ENCODE measurements at regions of chr1 and their contacts with region 1.

Region 1: DNA sequence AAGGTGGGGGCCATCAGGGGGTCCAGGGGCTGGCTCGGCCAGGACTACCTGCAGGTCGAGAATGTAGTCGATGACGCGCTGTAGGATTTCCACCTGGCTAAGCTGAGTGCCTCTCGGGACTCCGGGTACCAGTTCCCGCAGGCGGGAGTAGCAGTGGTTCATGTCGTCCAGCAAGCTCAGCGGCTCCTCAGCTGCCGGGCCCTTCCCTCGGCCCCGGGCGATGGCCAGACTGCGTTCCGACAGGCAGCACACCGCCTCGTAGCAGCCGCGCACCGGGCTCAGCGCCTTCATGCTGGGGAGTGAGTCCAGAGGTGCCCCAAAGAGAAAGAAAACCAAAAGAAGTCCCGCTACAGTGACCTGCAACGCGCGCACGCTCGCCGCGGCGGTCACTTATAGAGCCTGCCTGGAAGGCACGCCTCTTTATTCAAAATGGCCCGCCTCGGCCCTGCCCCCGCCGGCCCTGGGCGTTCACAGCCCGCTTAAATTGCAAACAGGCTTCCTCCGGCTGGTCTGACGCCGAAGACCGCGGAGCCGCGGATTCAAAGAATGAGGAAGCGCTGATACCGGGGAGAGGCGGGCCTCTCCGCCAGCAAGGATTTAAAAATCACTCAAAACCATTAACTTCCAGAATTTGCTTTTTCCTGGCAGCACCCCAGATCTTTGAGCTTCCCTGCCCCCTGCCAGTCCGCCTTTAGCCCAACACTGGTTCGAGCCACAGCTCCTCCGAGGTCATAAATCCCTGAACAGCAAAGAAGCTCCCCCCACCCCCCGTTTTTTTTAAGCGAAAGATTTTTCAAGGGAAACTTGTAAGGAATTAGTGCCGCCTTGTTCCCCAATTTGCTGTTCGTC is at the start of gene ID3:
- DNase-seq: peak; percentile 96
- H3K4me3 Mint-ChIP-seq: peak within 1 kb of the TSS; percentile 94
- H3K27ac Mint-ChIP-seq: peak within 1 kb of the TSS; percentile 90
- H3K4me1 Mint-ChIP-seq: peaks cover 49% of the 10 kb centered on the region
- H3K27me3 Mint-ChIP-seq: no peaks in the 10 kb centered on the region
- CTCF ChIP-seq: no peak
- total RNA-seq, gene ID3: 15.7 and 34.8 TPM in 2 replicates

Region 2: DNA sequence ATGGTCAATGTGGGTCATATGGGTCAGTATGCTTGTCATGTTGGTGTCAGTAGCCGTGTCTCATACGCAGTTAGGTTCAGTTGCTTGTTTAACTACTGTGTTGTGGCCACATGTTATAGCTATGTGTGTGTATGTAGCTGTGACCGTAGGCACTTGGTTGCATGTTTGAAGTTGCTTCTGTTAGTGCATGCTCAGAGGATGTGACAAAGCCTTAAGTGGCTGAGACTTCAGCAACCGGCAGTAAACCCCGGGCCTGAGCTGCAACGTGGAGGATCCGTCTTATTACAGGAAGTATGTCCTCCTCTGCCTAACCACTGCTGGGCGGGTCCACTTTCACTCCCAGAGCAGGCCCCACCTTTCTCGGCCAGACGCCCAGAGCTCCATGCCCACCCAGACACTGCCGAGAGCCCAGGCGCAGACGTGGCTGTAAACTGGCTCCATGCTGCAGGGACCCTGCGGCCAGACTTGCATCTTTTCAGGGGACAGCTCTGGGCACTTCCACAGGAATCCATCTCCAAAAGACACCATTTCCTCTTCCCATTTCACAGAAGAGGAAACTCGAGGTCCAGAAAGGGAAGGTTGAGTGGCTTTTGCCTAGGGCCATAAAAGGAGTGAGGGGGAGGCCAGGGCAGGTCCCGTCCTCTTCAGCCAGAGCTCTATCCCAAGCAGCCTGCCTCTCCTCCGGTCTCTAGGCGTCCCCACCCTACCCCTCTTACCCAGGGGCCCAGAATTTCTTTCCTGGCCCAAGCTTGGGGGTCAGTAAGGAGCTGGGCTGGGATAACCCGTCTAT is 136.9 kb before region 1 on chr1:
- CTCF ChIA-PET with region 1: no interaction called
- POLR2A ChIA-PET with region 1: no interaction called
- intact Hi-C with region 1: no loop called
- DNase-seq: no peak
- H3K4me3 Mint-ChIP-seq: no peak overlapping the region
- H3K27ac Mint-ChIP-seq: no peak overlapping the region
- H3K4me1 Mint-ChIP-seq: peaks cover 8% of the 10 kb centered on the region
- H3K27me3 Mint-ChIP-seq: no peaks in the 10 kb centered on the region
- CTCF ChIP-seq: no peak

Region 3: DNA sequence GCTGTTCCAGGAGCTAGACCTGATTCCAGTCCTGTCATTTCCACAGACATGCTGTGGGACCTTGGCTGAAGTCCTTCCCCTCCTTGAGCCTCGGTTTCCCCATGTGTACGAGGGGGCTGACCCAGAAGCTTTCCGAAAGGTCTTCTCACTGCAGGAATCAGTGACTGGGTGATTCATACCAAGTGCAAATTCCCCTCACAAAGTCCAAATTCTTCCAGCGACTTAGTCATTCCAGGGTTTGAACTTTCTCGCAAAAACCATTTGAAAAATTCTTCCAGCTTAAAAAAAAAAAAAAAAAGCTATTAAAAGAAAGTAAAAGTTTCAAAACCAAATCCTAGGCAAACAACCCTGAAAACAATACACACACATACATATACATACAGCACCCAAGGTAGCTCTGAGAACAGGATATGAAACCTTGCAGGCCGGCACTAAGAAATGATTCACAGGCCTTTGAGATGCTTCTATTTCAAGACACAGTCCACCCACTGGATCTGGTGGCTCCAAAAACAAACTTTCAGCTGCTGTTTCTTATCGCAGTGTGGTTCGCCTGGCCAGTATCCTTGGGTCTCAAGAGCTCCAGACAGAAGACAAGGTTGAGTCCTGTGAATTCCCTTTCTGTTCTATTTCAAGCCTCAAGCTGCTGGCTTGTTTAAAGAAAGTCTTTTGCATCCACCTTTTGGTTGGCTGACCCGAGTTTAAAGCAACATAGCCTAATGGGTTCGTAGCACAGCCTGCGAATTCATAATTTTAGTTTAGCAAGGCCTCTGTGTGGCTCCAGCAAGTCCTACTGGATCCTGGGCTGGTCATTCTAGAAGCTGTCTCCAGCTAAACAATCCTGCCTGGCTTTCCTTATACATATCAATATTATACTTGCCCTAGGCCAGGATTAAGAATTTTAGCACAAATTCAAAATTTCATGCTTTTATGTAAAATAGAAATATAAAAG is 18.0 kb after region 1 on chr1:
- CTCF ChIA-PET with region 1: interaction called, 17 read pairs
- POLR2A ChIA-PET with region 1: interaction called, 131 read pairs
- intact Hi-C with region 1: no loop called
- DNase-seq: peak; percentile 60
- H3K4me3 Mint-ChIP-seq: peak overlapping the region; percentile 49
- H3K27ac Mint-ChIP-seq: peak overlapping the region; percentile 92
- H3K4me1 Mint-ChIP-seq: peaks cover 22% of the 10 kb centered on the region
- H3K27me3 Mint-ChIP-seq: no peaks in the 10 kb centered on the region
- CTCF ChIP-seq: no peak

Region 4: GRCh38 chr1:23591460-23592208 is 32.3 kb after region 1 on chr1:
- CTCF ChIA-PET with region 1: interaction called, 9 read pairs
- POLR2A ChIA-PET with region 1: interaction called, 622 read pairs
- intact Hi-C with region 1: loop called (anchors 1 kb)
- DNase-seq: no peak
- H3K4me3 Mint-ChIP-seq: no peak overlapping the region
- H3K27ac Mint-ChIP-seq: peak overlapping the region; percentile 94
- H3K4me1 Mint-ChIP-seq: peaks cover 74% of the 10 kb centered on the region
- H3K27me3 Mint-ChIP-seq: no peaks in the 10 kb centered on the region
- CTCF ChIP-seq: no peak

Region 5: DNA sequence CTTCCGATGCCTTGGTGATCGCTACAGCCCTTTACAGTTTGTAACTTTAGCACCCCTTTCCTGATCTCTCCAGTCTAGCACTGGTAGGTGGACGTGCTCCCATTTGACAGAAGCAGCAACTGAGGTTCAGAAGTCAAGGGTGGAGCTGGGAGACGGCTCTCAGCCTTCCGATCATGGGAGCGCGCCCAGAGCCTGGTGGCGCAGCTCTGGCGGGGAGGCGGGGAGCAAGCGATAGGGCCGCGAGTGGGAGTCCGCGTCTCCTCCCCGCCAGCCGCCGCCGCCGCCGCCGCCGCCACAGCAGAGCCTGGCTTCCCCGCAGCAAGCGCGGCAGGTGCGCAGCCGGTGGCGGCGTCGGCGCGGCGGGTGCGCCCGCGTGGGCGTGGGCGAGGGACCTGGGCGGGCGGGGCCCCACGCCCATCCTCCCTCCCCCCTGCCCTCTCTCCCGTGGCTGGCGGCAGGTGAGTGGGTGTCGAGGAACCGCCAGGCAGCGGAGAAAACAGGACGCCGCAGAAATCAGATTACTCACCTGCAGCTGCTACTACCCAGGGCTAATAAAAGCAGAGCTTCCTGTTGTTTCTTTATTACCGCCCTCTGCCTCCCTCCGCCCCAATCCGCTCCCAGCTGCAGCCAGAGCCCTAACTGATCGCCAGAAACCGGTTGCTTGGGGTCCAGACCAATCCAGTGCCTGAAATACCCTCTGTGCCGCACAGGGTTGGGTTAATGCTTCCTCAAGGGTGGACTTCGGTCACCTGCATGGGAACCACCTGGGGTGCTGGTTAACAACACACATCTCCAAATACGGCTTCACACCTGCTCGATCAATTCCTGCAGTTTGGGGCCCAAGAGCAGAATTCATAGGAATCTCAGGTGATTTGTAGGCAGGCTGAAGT is 60.2 kb after region 1 on chr1:
- CTCF ChIA-PET with region 1: interaction called, 3 read pairs
- POLR2A ChIA-PET with region 1: interaction called, 63 read pairs
- intact Hi-C with region 1: no loop called
- DNase-seq: peak; percentile 42
- H3K4me3 Mint-ChIP-seq: peak overlapping the region; percentile 53
- H3K27ac Mint-ChIP-seq: no peak overlapping the region
- H3K4me1 Mint-ChIP-seq: peaks cover 6% of the 10 kb centered on the region
- H3K27me3 Mint-ChIP-seq: no peaks in the 10 kb centered on the region
- CTCF ChIP-seq: no peak

Region 6: GRCh38 chr1:23718482-23718881 is 159.1 kb after region 1 on chr1:
- CTCF ChIA-PET with region 1: no interaction called
- POLR2A ChIA-PET with region 1: no interaction called
- intact Hi-C with region 1: no loop called
- DNase-seq: peak; percentile 61
- H3K4me3 Mint-ChIP-seq: no peak overlapping the region
- H3K27ac Mint-ChIP-seq: no peak overlapping the region
- H3K4me1 Mint-ChIP-seq: peaks cover 16% of the 10 kb centered on the region
- H3K27me3 Mint-ChIP-seq: no peaks in the 10 kb centered on the region
- CTCF ChIP-seq: peak; percentile 56

Region 7: DNA sequence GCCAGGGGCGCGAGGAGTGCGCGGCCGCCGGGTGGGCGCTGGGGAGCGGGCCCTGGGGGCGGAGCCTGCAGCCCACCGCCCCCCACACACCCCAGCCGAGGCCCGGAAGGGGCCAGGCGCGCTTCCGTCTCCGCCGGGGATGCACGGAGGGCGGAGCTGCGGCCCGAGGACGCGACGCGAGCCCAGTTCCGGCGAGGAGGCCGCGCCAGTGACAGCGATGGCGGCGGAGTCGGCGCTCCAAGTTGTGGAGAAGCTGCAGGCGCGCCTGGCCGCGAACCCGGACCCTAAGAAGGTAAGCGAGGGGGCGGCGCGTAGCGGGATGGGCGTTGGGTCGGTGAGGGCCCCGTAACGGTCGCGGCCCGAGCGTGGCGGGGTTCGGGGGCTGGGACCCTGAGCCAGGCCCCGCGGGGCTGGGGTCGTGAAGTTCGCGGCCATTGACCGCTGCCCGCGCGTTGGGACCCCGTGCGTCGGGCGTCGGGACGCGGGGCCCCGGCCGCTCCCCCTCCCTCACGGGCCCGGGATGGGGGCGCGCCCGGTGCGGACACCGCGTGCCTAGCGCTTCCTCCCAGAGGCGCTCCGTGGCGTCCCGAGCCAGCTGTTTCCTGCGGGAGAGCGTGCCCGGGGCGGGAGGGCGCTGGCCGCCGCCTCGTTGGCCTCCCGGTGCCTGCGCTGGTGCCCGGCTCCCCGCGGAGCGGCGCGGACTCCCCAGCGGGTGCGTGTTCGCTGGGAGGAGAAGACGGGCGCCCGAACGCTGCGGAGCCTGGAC is 184.1 kb after region 1 on chr1 and contains the start of gene ELOA:
- CTCF ChIA-PET with region 1: no interaction called
- POLR2A ChIA-PET with region 1: interaction called, 13 read pairs
- intact Hi-C with region 1: no loop called
- DNase-seq: peak; percentile 58
- H3K4me3 Mint-ChIP-seq: peak within 1 kb of the TSS; percentile 83
- H3K27ac Mint-ChIP-seq: peak within 1 kb of the TSS; percentile 86
- H3K4me1 Mint-ChIP-seq: peaks cover 35% of the 10 kb centered on the region
- H3K27me3 Mint-ChIP-seq: no peaks in the 10 kb centered on the region
- CTCF ChIP-seq: no peak
- total RNA-seq, gene ELOA: 68.3 and 69.1 TPM in 2 replicates